K562 (cell line): ENCODE measurements at regions of chr7 and their contacts with region 1.

Region 1: GRCh38 chr7:93238748-93239147 is 6.6 kb downstream of the VPS50 start:
- DNase-seq: peak in 1 of 4 experiments; percentile 35
- ATAC-seq: peak; percentile 45
- H3K4me3 ChIP-seq: no peak overlapping the region
- H3K27ac ChIP-seq: peak overlapping the region; percentile 25; the same call in 1 of the 3 replicates
- H3K4me1 ChIP-seq: peaks cover 0 to 4% of the 10 kb centered on the region in 2 experiments; a peak in 2 of 5 replicates
- H3K27me3 ChIP-seq: no peaks in the 10 kb centered on the region
- CTCF ChIP-seq: no peak
- EP300 ChIP-seq: no peak; the same call in 1 of the 2 replicates
- POLR2A ChIP-seq: no peak
- RAD21 ChIP-seq: no peak

Region 2: GRCh38 chr7:93544691-93545090 is 305.9 kb after region 1 on chr7:
- CTCF ChIA-PET with region 1: no interaction called
- POLR2A ChIA-PET with region 1: no interaction called
- in situ Hi-C with region 1: loop called (anchors 5 kb)
- intact Hi-C with region 1: no loop called
- DNase-seq: no peak
- ATAC-seq: no peak; the same call in 2 of the 3 replicates
- H3K4me3 ChIP-seq: no peak overlapping the region
- H3K27ac ChIP-seq: no peak overlapping the region
- H3K4me1 ChIP-seq: no peaks in the 10 kb centered on the region
- H3K27me3 ChIP-seq: 0 out of 5 replicates have a peak, but pooled peaks cover 0 to 4% of the 10 kb centered on the region in 2 experiments
- CTCF ChIP-seq: no peak
- EP300 ChIP-seq: no peak
- POLR2A ChIP-seq: no peak
- RAD21 ChIP-seq: no peak